ENCODE measurements at regions of chr12 and their contacts with region 1.

Region 1: GRCh38 chr12:1690578-1691122 is at the start of gene ADIPOR2:
- DNase-seq: peak; percentile 96
- H3K4me3 ChIP-seq: peak within 1 kb of the TSS; percentile 74 to 99 (median 84)
- H3K27ac ChIP-seq: peak within 1 kb of the TSS; percentile 90 to 100 (median 96)
- H3K4me1 ChIP-seq: peaks cover 0 to 42% (median 21%) of the 10 kb centered on the region in 4 donors
- H3K27me3 ChIP-seq: no peaks in the 10 kb centered on the region
- CTCF ChIP-seq: no peak
- EP300 ChIP-seq: no peak
- POLR2A ChIP-seq: peak; percentile 86
- total RNA-seq, gene ADIPOR2: 27.9 to 74.2 (median 52.1) TPM

Region 2: GRCh38 chr12:1517007-1517406 is 173.6 kb before region 1 on chr12:
- in situ Hi-C with region 1: no loop called
- intact Hi-C with region 1: no loop called
- DNase-seq: no peak
- H3K4me3 ChIP-seq: no peak overlapping the region
- H3K27ac ChIP-seq: no peak overlapping the region
- H3K4me1 ChIP-seq: peaks cover 12 to 17% (median 12%) of the 10 kb centered on the region in 4 donors
- H3K27me3 ChIP-seq: no peaks in the 10 kb centered on the region
- CTCF ChIP-seq: peak in 2 of 5 experiments; percentile 21 to 28
- EP300 ChIP-seq: no peak
- POLR2A ChIP-seq: no peak

Region 3: DNA sequence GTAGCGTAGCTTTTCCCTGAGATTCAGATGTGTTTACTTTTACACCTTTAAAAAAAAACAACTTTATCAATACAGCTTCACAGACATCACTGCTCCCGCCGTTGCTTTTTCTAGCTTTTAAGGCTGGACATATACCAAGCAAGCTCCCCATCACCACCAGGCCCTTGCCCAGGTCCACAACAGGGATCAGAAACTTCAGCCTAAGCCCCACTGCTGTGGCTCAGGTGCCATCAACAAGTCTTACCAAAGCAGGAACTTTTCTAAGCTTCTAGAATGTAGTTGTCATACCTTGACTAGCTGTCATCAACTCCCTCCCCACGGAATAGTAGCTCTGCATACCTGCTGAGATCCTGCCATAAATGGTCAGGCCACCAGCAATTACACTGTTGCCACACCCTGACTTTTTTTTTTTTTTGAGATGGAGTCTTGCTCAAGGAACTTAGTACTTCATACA is 19.8 kb before region 1 on chr12:
- in situ Hi-C with region 1: no loop called
- intact Hi-C with region 1: loop called (anchors 1 kb)
- DNase-seq: peak; percentile 57
- H3K4me3 ChIP-seq: no peak overlapping the region
- H3K27ac ChIP-seq: peak overlapping the region; percentile 87 to 93 (median 92)
- H3K4me1 ChIP-seq: peaks cover 13 to 58% (median 40%) of the 10 kb centered on the region in 4 donors
- H3K27me3 ChIP-seq: no peaks in the 10 kb centered on the region
- CTCF ChIP-seq: peak in 1 of 5 experiments; percentile 38
- EP300 ChIP-seq: no peak
- POLR2A ChIP-seq: peak; percentile 36

Region 4: GRCh38 chr12:1758887-1759286 is 68.2 kb after region 1 on chr12:
- in situ Hi-C with region 1: no loop called
- intact Hi-C with region 1: loop called (anchors 10 kb)
- DNase-seq: no peak
- H3K4me3 ChIP-seq: no peak overlapping the region
- H3K27ac ChIP-seq: no peak overlapping the region
- H3K4me1 ChIP-seq: peaks cover 0 to 19% (median 0%) of the 10 kb centered on the region in 4 donors
- H3K27me3 ChIP-seq: no peaks in the 10 kb centered on the region
- CTCF ChIP-seq: no peak
- EP300 ChIP-seq: no peak
- POLR2A ChIP-seq: no peak

Measured in transverse colon (tissue), 4 donors.